Esophagus squamous epithelium (tissue), 5 donors: ENCODE measurements at regions of chr15 and their contacts with region 1.

Region 1: DNA sequence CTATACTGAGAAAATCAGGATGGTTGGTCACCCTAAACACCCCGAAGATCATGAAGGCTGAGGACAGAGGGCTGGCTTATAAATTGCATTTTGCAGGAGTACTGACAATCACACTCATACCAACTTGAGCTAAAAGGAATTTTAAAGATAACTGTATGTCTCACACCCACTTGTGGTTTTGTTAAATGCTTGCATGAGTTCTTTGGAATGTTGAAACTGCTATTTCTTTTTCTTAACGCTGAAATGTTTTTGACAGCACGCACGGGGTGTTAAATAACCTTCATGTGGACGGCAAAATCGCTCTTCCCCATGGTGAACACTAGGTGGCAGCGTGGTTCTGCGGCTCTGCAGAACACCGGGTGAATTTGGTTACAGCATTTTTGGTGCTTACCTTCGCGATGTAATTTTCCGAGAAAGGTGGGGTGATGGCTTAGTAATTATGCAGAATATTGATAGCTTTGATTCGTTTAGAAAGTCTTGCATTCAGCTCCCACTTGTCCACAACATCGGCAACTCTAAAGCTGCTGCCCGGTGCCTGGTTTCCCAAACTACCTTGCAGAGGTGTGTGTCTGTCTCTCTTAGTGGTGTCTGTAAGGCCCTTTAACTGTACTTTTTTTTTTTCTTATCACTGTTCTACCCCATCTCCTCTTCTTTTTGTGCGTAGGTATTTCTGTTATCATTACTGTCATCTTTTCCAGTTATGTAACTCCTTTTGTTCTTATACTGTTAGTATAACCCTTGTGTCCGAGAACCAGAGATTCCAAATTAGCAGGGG is 51.7 kb downstream of the ARNT2 start:
- DNase-seq: no peak
- H3K4me3 ChIP-seq: no peak overlapping the region
- H3K27ac ChIP-seq: no peak overlapping the region
- H3K4me1 ChIP-seq: peaks cover 0 to 15% (median 10%) of the 10 kb centered on the region in 3 donors
- H3K27me3 ChIP-seq: peaks cover 0 to 14% (median 0%) of the 10 kb centered on the region in 4 donors
- CTCF ChIP-seq: peak; percentile 78 to 94 (median 88)
- POLR2A ChIP-seq: no peak

Region 2: GRCh38 chr15:79370716-79371115 is 1085.1 kb before region 1 on chr15:
- intact Hi-C with region 1: no loop called
- DNase-seq: no peak
- H3K4me3 ChIP-seq: no peak overlapping the region
- H3K27ac ChIP-seq: no peak overlapping the region
- H3K4me1 ChIP-seq: no peaks in the 10 kb centered on the region
- H3K27me3 ChIP-seq: no peaks in the 10 kb centered on the region
- CTCF ChIP-seq: no peak
- POLR2A ChIP-seq: no peak

Region 3: DNA sequence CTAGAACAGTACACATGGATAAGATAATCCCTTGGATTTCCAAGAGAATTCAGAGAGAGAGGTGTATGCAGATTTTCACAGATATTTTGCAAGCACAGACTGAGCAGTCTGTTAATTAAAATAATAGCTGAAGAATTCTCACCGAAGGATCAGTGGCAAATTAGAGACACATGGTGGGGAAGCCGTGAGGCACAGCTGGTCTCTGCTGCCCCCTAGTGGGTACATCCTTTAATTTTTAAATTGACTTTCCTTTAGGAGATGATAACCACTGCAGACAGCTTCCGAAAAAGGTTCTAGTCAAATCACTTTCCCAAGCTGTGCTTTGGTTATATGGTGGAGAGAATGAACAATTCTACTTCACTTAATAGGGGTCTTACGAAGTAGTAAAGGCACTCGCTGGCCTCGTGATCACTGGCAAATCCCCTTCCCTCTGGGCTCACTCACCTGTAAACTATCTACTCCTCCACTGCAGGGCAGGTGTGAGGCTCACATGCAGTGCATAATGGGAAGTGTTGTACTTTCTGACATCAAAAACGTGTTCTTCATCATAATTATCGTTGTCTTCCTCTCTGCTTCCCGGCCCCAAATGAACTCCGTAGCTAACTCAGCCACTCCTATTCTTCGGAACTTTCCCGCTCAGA is 514.3 kb after region 1 on chr15:
- intact Hi-C with region 1: loop called (anchors 10 kb)
- DNase-seq: no peak
- H3K4me3 ChIP-seq: no peak overlapping the region
- H3K27ac ChIP-seq: no peak overlapping the region
- H3K4me1 ChIP-seq: peaks cover 0 to 20% (median 4%) of the 10 kb centered on the region in 3 donors
- H3K27me3 ChIP-seq: no peaks in the 10 kb centered on the region
- CTCF ChIP-seq: peak; percentile 75 to 90 (median 84)
- POLR2A ChIP-seq: no peak